ENCODE measurements at regions of chr9 and their contacts with region 1.

Region 1: GRCh38 chr9:35790385-35791296 is 750 bp upstream of the NPR2 start:
- DNase-seq: no peak
- ATAC-seq: peak; percentile 92
- H3K4me3 ChIP-seq: peak overlapping the region; percentile 50
- H3K27ac ChIP-seq: peak overlapping the region; percentile 51
- H3K4me1 ChIP-seq: peaks cover 12% of the 10 kb centered on the region
- H3K27me3 ChIP-seq: no peaks in the 10 kb centered on the region
- CTCF ChIP-seq: peak; percentile 86

Region 2: GRCh38 chr9:35203528-35203927 is 587.1 kb before region 1 on chr9:
- intact Hi-C with region 1: no loop called
- DNase-seq: no peak
- ATAC-seq: no peak
- H3K4me3 ChIP-seq: no peak overlapping the region
- H3K27ac ChIP-seq: no peak overlapping the region
- H3K4me1 ChIP-seq: no peaks in the 10 kb centered on the region
- H3K27me3 ChIP-seq: no peaks in the 10 kb centered on the region
- CTCF ChIP-seq: no peak

Region 3: DNA sequence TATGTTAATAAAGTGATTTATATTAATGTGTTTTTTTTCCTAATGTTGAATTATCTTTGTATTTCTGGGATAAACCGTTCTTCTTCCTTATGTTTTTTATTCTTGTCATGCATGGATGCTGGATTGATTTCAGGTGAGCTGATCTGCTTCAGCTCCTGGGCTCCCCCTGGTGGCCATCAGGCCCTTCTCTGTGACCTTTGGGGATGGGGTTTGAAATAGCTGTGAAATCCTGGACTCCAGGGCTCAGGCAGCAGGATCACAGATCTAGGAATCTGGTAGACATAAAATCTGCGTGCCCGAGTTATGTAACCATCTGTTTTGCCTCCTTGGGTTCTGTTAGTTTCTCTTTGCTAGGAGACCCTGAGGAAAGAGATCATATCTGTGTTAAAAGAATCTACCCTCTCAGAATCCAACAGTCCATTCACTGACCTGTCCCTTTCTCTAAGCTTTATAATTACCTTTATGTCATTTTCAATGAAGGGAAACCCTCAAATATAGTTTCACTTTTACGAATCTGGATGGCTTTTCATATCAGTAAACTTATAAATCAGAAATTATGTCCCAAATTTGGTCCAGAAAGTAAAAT is 91.7 kb after region 1 on chr9:
- intact Hi-C with region 1: loop called (anchors 2 kb)
- DNase-seq: peak; percentile 91
- ATAC-seq: peak; percentile 97
- H3K4me3 ChIP-seq: no peak overlapping the region
- H3K27ac ChIP-seq: no peak overlapping the region
- H3K4me1 ChIP-seq: no peaks in the 10 kb centered on the region
- H3K27me3 ChIP-seq: no peaks in the 10 kb centered on the region
- CTCF ChIP-seq: peak; percentile 100

Region 4: GRCh38 chr9:36174731-36175130 is 384.1 kb after region 1 on chr9:
- intact Hi-C with region 1: no loop called
- DNase-seq: no peak
- ATAC-seq: no peak
- H3K4me3 ChIP-seq: no peak overlapping the region
- H3K27ac ChIP-seq: no peak overlapping the region
- H3K4me1 ChIP-seq: no peaks in the 10 kb centered on the region
- H3K27me3 ChIP-seq: no peaks in the 10 kb centered on the region
- CTCF ChIP-seq: no peak